ENCODE measurements at regions of chrX and their contacts with region 1.

Region 1: GRCh38 chrX:70769659-70770232 is 138.8 kb downstream of the TEX11 start:
- DNase-seq: peak; percentile 28
- CTCF ChIP-seq: peak; percentile 43

Region 2: DNA sequence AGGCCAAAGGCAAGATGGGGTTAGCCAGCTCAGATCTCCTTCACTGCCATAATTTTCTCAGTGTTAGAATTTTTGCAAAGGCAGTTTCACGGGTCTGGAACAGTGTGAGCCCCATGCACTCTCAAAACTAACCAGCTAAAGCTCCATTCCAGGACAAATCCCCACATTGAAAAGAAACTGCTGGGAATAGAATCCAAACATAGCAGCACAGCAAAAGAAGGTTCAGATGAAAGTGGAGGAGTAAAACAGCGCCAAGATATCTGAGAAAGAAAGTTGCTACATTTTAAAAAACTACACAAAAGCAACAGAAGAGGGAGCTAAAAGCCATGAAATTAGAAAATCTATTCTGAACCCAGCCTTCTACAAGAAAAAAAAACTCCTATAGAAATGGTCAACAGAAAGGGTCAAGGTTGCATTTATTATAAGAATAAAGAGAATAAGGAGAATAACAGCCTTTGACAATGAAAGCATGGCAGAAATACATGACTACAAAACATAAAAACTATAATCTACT is 200.8 kb after region 1 on chrX:
- in situ Hi-C with region 1: loop called (anchors 25 kb)
- DNase-seq: no peak
- CTCF ChIP-seq: peak; percentile 6